ENCODE measurements at regions of chr6 and their contacts with region 1.

Region 1: GRCh38 chr6:3742426-3743344 is 8.8 kb downstream of the PXDC1 start:
- DNase-seq: peak; percentile 78 to 83 (median 79)
- H3K4me3 ChIP-seq: peak overlapping the region; percentile 3 to 67 (median 20)
- H3K4me3 Mint-ChIP-seq: peak overlapping the region; percentile 73 to 85
- H3K27ac ChIP-seq: peak overlapping the region in 1 of 2 donors; percentile 9
- H3K27ac Mint-ChIP-seq: peak overlapping the region in 6 of 7 donors; percentile 38 to 67 (median 63)
- H3K4me1 ChIP-seq: peaks cover 12 to 16% of the 10 kb centered on the region in 2 donors
- H3K4me1 Mint-ChIP-seq: peaks cover 20% of the 10 kb centered on the region
- H3K27me3 ChIP-seq: no peaks in the 10 kb centered on the region
- H3K27me3 Mint-ChIP-seq: peaks cover 3 to 10% (median 7%) of the 10 kb centered on the region in 3 donors
- CTCF ChIP-seq: peak; percentile 91

Region 2: DNA sequence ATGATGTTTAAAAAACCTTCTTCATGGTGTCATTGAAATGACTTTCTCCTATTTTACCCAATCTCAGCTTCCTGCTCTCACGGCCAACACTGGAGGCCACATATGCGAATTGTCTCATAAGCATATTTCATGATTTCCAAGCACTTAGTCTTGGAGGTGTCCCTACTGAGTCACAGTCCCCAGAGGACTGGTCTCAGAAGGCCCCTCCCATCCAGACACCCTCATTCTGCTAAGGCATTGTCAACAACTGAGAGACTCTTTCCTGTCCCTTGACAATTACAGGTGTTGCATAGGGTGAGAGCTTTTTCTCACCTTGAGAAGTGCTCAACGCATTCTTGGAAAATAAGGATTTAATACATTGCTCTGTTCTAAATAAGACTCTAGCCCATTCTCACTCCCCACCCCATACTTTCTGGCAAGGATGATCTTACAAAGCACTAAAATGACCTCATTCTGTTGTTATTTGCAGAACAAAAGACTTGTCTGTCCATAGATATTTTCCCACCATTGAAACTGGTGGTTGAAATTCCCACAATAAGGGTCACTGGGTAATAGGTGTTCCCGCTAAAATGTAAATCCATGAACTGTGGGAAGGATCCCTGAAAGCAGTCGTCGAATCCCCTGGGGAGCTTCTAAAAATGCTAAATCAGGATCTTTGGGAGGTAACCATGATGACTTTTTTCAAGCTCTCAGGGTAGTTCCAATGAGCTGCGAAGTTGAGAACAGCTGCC is 253.5 kb before region 1 on chr6:
- intact Hi-C with region 1: no loop called
- DNase-seq: no peak
- H3K4me3 ChIP-seq: no peak overlapping the region
- H3K4me3 Mint-ChIP-seq: no peak overlapping the region
- H3K27ac ChIP-seq: no peak overlapping the region
- H3K27ac Mint-ChIP-seq: no peak overlapping the region
- H3K4me1 ChIP-seq: no peaks in the 10 kb centered on the region
- H3K4me1 Mint-ChIP-seq: no peaks in the 10 kb centered on the region
- H3K27me3 ChIP-seq: no peaks in the 10 kb centered on the region
- H3K27me3 Mint-ChIP-seq: peaks cover 3 to 10% (median 6%) of the 10 kb centered on the region in 3 donors
- CTCF ChIP-seq: no peak

Region 3: GRCh38 chr6:3990692-3991501 is 248.2 kb after region 1 on chr6:
- intact Hi-C with region 1: loop called (anchors 2 to 5 kb)
- DNase-seq: peak; percentile 57 to 72 (median 64)
- H3K4me3 ChIP-seq: peak overlapping the region in 1 of 3 experiments; percentile 51
- H3K4me3 Mint-ChIP-seq: peak overlapping the region; percentile 54 to 81
- H3K27ac ChIP-seq: no peak overlapping the region
- H3K27ac Mint-ChIP-seq: no peak overlapping the region
- H3K4me1 ChIP-seq: peaks cover 0 to 3% of the 10 kb centered on the region in 2 donors
- H3K4me1 Mint-ChIP-seq: peaks cover 6% of the 10 kb centered on the region
- H3K27me3 ChIP-seq: no peaks in the 10 kb centered on the region
- H3K27me3 Mint-ChIP-seq: peaks cover 0 to 2% (median 0%) of the 10 kb centered on the region in 3 donors
- CTCF ChIP-seq: peak; percentile 83

Region 4: GRCh38 chr6:4008324-4009047 is 265.8 kb after region 1 on chr6:
- intact Hi-C with region 1: loop called (anchors 5 kb)
- DNase-seq: peak; percentile 51 to 81 (median 67)
- H3K4me3 ChIP-seq: no peak overlapping the region
- H3K4me3 Mint-ChIP-seq: no peak overlapping the region
- H3K27ac ChIP-seq: no peak overlapping the region
- H3K27ac Mint-ChIP-seq: peak overlapping the region in 5 of 7 donors; percentile 14 to 58 (median 46)
- H3K4me1 ChIP-seq: peaks cover 11% of the 10 kb centered on the region in 2 donors
- H3K4me1 Mint-ChIP-seq: peaks cover 17% of the 10 kb centered on the region
- H3K27me3 ChIP-seq: no peaks in the 10 kb centered on the region
- H3K27me3 Mint-ChIP-seq: no peaks in the 10 kb centered on the region
- CTCF ChIP-seq: peak; percentile 75

Region 5: GRCh38 chr6:4155848-4156466 is 413.3 kb after region 1 on chr6:
- intact Hi-C with region 1: loop called (anchors 5 kb)
- DNase-seq: peak; percentile 63 to 79 (median 68)
- H3K4me3 ChIP-seq: no peak overlapping the region
- H3K4me3 Mint-ChIP-seq: no peak overlapping the region
- H3K27ac ChIP-seq: no peak overlapping the region
- H3K27ac Mint-ChIP-seq: no peak overlapping the region
- H3K4me1 ChIP-seq: no peaks in the 10 kb centered on the region
- H3K4me1 Mint-ChIP-seq: peaks cover 6% of the 10 kb centered on the region
- H3K27me3 ChIP-seq: no peaks in the 10 kb centered on the region
- H3K27me3 Mint-ChIP-seq: peaks cover 0 to under 1% (median 0%) of the 10 kb centered on the region in 3 donors
- CTCF ChIP-seq: peak; percentile 89

Region 6: DNA sequence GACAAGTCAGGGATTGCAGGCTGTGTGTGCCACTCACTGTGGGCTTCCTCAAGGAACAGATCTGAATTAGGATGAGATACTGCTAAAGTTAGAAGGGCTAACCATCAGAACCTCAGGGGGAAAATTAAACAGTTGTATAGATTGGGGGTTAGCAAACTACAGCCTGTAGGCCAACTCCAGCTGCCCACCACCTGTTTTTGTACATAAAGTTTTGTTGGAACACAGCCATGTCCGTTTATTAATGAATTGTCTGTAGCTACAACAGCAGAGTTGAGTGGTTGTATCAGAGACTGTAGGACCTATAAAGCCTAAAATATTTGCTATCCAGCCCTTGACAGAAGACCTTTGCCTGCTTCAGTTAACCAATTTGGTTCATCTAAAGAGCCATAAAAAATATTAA is 519.8 kb after region 1 on chr6:
- intact Hi-C with region 1: no loop called
- DNase-seq: no peak
- H3K4me3 ChIP-seq: no peak overlapping the region
- H3K4me3 Mint-ChIP-seq: no peak overlapping the region
- H3K27ac ChIP-seq: no peak overlapping the region
- H3K27ac Mint-ChIP-seq: no peak overlapping the region
- H3K4me1 ChIP-seq: no peaks in the 10 kb centered on the region
- H3K4me1 Mint-ChIP-seq: no peaks in the 10 kb centered on the region
- H3K27me3 ChIP-seq: no peaks in the 10 kb centered on the region
- H3K27me3 Mint-ChIP-seq: peaks cover 0 to 4% (median 1%) of the 10 kb centered on the region in 3 donors
- CTCF ChIP-seq: no peak